ENCODE measurements at regions of chr20 and their contacts with region 1.

Region 1: DNA sequence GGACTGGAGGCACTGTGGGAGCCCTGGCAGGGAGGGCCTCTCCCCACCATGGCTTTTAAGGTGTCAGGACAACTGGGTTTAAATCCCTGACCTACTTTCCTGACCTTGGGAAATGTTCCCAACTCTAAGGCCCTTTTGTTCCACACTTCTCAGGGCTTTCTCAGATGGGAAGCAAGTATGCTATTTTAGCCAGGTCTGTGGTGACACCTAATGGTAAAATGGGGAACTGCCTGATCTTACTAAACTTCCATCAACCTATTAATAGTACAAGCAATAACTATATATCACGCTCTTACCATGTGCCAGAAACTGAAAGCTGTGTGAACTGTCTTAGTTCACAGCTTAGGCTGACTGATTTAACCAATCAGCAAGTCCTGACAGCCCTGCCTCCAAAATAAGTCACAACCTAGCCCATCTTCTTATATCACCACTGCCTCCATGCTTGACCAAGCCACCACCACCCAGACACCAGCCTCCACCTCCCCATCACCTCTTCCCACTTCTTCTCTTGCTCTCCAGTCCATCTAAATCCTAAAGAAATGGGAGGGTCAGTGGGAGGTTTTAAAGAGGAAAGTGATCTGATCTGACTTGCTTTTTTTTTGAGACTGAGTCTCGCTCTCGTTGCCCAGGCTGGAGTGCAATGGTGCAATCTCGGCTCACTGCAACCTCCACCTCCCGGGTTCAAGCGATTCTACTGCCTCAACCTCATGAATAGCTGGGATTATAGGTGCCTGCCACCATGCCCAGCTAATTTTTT is 6.9 kb upstream of the BLCAP start:
- DNase-seq: peak; percentile 44
- H3K4me3 ChIP-seq: no peak overlapping the region
- H3K27ac ChIP-seq: no peak overlapping the region
- H3K4me1 ChIP-seq: peaks cover 3 to 35% (median 10%) of the 10 kb centered on the region in 4 donors
- H3K27me3 ChIP-seq: no peaks in the 10 kb centered on the region
- CTCF ChIP-seq: peak; percentile 82 to 97 (median 87)
- EP300 ChIP-seq: no peak
- POLR2A ChIP-seq: no peak

Region 2: DNA sequence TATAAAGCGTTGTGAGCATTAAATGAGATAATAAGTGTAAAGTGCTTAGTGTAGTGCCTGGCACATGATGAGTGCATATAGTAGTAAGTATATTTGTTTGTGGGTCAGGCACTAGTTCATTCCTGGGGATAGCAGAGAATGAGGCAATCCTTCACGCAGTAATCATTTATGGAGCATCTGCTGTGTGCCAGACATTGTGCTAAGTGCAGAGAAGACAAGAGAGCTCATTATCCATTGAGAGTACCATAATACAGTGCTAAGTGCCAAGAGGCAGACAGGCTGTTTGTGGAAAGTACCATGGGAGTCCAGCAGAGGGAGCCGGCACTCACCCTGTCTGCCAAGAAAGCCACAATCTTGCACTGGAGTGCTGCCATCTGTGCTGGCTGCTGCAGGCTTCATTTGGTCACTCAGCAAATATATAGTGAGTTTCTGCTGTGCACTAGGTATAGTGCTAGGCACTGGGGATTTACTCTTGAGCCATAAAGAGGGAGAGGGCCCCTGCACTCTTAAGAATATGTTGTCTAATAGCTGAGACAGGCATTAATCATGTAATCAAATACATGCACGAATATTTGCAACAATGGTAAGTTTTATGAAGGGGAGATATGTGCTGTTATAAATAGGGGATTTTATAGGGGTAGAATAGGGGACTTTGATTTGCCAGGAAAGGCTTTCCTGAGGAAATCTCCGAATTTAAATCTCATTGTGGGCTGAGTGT is 342.3 kb before region 1 on chr20:
- in situ Hi-C with region 1: loop called in 1 of 4 experiments (anchors 10 kb)
- intact Hi-C with region 1: no loop called
- DNase-seq: peak; percentile 89
- H3K4me3 ChIP-seq: no peak overlapping the region
- H3K27ac ChIP-seq: no peak overlapping the region
- H3K4me1 ChIP-seq: peaks cover 6 to 24% (median 11%) of the 10 kb centered on the region in 4 donors
- H3K27me3 ChIP-seq: no peaks in the 10 kb centered on the region
- CTCF ChIP-seq: peak; percentile 82 to 91 (median 88)
- EP300 ChIP-seq: no peak
- POLR2A ChIP-seq: no peak

Region 3: GRCh38 chr20:37265152-37265551 is 269.4 kb before region 1 on chr20:
- in situ Hi-C with region 1: loop called (anchors 5 to 10 kb)
- intact Hi-C with region 1: loop called (anchors 2 kb)
- DNase-seq: no peak
- H3K4me3 ChIP-seq: no peak overlapping the region
- H3K27ac ChIP-seq: no peak overlapping the region
- H3K4me1 ChIP-seq: peaks cover 0 to 4% (median 0%) of the 10 kb centered on the region in 4 donors
- H3K27me3 ChIP-seq: no peaks in the 10 kb centered on the region
- CTCF ChIP-seq: no peak
- EP300 ChIP-seq: no peak
- POLR2A ChIP-seq: no peak

Region 4: DNA sequence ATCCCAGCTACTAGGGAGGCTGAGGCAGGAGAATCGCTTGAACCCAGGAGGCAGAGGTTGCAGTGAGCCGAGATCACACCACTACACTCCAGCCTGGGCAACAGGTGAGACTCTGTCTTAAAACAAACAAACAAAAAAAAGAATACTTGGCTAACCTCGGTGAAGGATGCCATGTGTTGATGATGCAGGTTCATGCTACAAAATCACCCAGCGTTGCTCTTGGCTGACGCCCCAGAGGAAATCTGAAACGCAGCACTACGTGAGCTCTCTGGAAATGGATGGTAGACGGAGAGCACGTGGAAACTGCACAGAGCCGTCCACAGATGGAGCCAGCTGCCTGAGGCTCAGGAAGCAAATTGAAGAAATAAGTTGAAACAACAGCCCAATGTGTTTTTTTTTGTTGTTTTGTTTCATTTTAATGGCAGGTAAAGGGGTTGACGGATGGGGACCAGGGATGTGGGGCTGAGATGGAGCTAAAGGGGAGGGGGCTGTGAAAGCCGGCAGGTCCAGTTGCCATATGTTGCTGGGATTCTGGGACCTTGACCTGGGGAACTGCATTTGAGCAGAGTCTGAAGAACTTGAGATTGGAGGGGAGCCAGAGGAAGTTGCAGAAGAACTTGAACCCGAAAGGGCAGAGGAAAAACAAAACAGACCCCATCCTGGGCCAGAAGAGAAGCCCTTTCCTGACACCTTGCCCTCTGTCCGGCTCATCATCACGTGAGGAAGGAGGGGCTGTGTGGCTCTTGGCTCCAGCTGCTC is 257.9 kb before region 1 on chr20:
- in situ Hi-C with region 1: loop called in 3 of 4 experiments (anchors 5 to 10 kb)
- intact Hi-C with region 1: loop called (anchors 2 kb)
- DNase-seq: peak; percentile 56
- H3K4me3 ChIP-seq: no peak overlapping the region
- H3K27ac ChIP-seq: peak overlapping the region; percentile 38 to 66 (median 58)
- H3K4me1 ChIP-seq: peaks cover 5 to 20% (median 8%) of the 10 kb centered on the region in 4 donors
- H3K27me3 ChIP-seq: no peaks in the 10 kb centered on the region
- CTCF ChIP-seq: peak in 2 of 5 experiments; percentile 26 to 40
- EP300 ChIP-seq: no peak
- POLR2A ChIP-seq: no peak

Region 5: DNA sequence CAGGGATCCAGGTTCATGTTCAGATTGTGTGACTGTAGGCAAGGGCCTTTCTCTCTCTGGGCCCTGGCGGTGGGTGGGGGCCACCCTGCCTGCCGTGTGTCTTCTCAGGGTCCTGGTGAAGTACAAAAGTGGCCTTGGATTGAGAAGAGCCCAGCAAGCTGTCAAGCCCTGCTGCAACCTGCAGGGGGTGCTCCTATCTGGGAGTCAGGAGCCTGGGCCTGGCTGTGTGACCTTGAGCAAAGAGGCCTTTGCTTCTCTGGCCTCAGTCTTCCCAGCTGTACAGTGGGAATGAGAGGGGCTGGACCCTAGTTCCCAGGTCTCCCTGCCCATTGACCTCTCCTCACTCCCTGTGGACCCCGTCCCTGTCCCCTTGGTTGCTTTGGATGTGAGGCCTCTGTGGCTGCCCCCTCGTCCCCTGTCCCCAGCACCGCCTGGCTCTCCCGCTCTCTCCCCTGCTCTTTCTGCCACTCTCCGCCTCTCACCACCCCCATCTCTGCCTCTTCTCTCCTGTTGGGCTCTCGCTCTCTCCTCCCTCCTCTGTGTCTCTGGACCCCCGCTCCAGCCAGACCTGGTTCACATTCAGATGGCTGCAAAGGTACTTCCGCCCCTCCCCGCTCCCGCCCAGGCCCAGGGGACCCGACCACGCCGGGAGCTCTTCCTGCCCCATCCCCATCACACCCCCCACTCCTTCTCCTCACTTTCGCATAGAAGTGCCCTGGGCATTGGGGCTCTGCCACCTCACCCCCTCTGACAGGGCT is 142.0 kb before region 1 on chr20:
- in situ Hi-C with region 1: loop called in 2 of 4 experiments (anchors 10 to 25 kb)
- intact Hi-C with region 1: loop called (anchors 5 kb)
- DNase-seq: no peak
- H3K4me3 ChIP-seq: no peak overlapping the region
- H3K27ac ChIP-seq: no peak overlapping the region
- H3K4me1 ChIP-seq: peaks cover 0 to 5% (median 0%) of the 10 kb centered on the region in 4 donors
- H3K27me3 ChIP-seq: no peaks in the 10 kb centered on the region
- CTCF ChIP-seq: no peak
- EP300 ChIP-seq: no peak
- POLR2A ChIP-seq: no peak

Measured in transverse colon (tissue), 4 donors.